Posterior vena cava (tissue), 2 donors: ENCODE measurements at regions of chr1 and their contacts with region 1.

Region 1: GRCh38 chr1:199573047-199573446 is 454.5 kb upstream of the NR5A2 start:
- DNase-seq: no peak

Region 2: GRCh38 chr1:199243423-199244061 is 329.5 kb before region 1 on chr1:
- intact Hi-C with region 1: loop called in 1 of 2 experiments (anchors 5 kb)
- DNase-seq: peak; percentile 73

Region 3: DNA sequence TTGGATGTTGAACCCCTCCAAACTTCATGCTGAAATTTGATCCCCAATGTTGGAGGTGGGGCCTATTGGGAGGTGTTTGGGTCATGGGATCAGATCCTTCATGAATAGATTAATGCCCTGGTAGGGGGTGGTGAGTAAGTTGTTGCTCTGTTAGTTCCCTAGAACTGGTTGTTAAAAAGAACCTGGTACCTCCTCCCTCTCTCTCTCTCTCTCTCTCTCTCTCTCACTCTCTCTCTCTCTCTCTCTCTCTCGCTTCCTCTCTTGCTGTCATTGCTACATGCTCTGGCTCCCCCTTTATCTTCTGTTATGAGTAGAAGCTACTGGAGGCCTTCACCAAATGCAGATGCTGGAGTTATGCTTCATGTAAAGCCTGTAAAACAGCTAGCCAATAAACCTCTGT is 43.7 kb before region 1 on chr1:
- intact Hi-C with region 1: loop called in 1 of 2 experiments (anchors 5 kb)
- DNase-seq: no peak